AG04449 (cell line): ENCODE measurements at regions of chr6 and their contacts with region 1.

Region 1: DNA sequence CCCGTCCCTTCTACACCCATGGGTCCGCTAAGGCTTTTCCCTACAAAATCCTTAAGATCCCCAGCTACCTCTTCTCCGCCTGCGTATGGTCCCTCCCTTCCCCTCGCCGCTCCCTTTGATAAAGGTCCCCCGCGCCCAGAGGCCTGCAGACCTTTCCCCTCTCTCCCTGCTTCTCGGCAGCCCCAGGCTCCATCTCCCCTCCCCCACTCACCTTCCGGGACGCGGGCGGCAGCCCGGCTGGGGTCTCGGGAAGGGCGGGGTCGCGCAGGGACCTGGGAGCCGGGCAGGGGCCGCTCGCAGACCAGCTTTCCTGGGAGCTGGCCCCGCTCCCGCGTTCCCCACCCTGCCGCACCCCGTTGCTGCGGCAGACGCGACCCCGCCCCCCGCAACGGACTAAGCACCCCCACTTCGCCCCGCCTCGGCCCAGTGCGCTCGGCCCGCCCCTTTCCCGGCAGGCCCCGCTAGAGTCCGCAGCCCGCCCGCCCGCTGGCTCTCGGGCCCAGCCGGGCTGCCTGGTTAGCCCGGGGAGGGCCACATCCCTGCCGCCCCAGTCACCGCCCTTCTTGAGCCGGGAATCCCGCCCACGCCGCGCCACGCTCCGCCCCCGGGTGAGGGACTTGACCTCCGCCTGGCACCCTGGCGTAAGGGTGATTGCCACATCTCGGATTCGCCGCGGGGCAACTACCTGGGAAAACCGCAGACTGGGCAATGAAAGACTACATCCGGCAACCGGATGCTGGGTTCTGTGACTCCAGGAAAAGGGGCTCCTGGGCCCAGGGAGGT is at the start of gene FLOT1:
- DNase-seq: no peak
- H3K4me3 ChIP-seq: peak within 1 kb of the TSS; percentile 99
- CTCF ChIP-seq: no peak

Region 2: DNA sequence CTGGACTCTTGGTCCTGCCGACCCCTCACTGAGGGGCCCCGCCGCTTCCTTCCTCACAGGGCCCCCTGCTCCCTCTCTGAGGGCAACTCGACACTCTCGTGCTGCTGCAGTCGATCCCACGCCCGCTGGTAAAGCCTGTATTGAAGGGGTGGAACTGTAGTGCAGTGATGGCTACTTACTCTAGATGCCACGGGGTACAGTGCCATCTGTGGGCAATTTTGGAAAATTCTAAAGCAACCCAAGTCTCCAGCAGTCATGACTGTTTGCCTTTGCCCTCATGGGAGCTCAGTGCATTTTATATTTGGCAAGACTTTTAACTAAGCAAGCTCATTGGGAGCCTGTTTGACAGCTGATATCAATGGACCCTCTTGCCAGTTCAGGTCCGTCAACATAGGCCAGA is 102.0 kb before region 1 on chr6:
- CTCF ChIA-PET with region 1: no interaction called
- POLR2A ChIA-PET with region 1: no interaction called
- DNase-seq: no peak
- H3K4me3 ChIP-seq: no peak overlapping the region
- CTCF ChIP-seq: no peak

Region 3: GRCh38 chr6:30730601-30731435 is 11.7 kb before region 1 on chr6:
- CTCF ChIA-PET with region 1: interaction called, 39 read pairs
- POLR2A ChIA-PET with region 1: interaction called, 7 read pairs
- DNase-seq: no peak
- H3K4me3 ChIP-seq: no peak overlapping the region
- CTCF ChIP-seq: peak; percentile 64

Region 4: GRCh38 chr6:30769088-30769852 is 26.8 kb after region 1 on chr6:
- CTCF ChIA-PET with region 1: interaction called, 3 read pairs
- POLR2A ChIA-PET with region 1: interaction called, 46 read pairs
- DNase-seq: peak; percentile 87
- H3K4me3 ChIP-seq: peak overlapping the region; percentile 39
- CTCF ChIP-seq: no peak

Region 5: DNA sequence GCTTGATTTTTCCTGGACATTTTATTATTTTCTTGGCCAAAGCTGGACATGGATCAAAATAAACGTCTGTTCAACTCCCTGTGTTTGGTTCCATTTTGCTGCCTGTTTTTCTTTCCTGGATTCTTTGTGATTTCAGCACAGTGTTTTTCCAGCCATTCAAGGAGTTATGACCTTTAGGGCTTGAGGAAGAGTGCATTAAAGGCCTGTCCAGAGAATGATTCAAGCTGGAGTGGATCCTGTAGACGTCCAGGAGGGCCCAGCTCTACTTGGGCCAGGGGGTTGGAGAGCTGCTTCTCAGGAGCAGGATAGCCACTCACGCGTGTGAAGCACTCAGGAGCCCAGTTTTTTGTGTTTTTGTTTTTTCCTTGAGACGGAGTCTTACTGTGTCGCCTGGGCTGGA is 58.4 kb after region 1 on chr6:
- CTCF ChIA-PET with region 1: no interaction called
- POLR2A ChIA-PET with region 1: no interaction called
- DNase-seq: no peak
- H3K4me3 ChIP-seq: no peak overlapping the region
- CTCF ChIP-seq: no peak

Region 6: DNA sequence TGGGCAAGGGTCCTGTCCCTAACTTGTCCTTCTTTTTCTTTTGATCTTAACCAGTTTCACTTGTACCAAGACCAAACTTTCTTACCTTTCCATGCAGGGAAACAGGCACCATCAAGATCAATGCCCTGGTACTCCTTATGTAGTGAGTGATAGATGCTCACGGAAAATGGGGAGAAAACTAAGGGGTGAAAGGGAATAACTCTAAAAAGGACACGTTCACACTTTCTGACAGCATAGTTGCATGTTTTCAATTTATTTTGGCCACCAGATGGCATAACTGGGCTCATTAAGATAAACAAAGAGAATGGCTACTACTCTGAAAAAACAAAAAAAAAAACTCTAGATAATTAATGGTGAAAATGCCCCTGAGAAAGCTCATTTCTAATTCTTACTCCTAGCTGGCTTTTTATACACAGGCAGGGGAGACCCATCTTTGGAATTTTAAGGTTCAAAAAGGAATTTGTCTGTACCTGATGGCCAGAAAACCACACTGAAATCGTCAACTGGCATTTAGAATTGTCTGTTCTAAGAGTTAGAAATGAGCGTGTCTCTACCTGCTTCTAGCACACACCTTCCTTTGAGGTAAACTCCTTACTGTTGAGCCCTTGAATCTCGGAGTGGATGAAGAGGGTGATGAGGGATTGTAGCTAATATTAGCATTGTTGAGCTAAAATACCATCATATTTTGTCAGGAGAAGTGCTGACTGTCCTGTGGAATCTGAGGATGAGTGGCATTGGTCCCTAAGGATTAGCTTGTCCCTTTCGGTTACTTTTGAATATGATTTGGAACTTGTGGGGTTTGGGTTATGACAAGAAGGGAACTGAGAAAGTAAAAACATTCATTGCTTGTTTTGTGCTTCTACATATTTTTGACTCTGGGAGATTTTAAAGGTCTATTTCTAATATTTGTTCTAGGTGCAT is 79.6 kb after region 1 on chr6:
- CTCF ChIA-PET with region 1: interaction called, 71 read pairs
- POLR2A ChIA-PET with region 1: interaction called, 45 read pairs
- DNase-seq: no peak
- H3K4me3 ChIP-seq: no peak overlapping the region
- CTCF ChIP-seq: peak; percentile 33

Region 7: GRCh38 chr6:32195652-32195901 is 1453.1 kb after region 1 on chr6:
- CTCF ChIA-PET with region 1: no interaction called
- POLR2A ChIA-PET with region 1: no interaction called
- DNase-seq: peak; percentile 97
- H3K4me3 ChIP-seq: peak overlapping the region; percentile 94
- CTCF ChIP-seq: peak; percentile 43